Activated CD4-positive, alpha-beta T cell treated with anti-CD3 and anti-CD28 coated beads for 36 hours (primary cell): ENCODE measurements at regions of chr3 and their contacts with region 1.

Region 1: DNA sequence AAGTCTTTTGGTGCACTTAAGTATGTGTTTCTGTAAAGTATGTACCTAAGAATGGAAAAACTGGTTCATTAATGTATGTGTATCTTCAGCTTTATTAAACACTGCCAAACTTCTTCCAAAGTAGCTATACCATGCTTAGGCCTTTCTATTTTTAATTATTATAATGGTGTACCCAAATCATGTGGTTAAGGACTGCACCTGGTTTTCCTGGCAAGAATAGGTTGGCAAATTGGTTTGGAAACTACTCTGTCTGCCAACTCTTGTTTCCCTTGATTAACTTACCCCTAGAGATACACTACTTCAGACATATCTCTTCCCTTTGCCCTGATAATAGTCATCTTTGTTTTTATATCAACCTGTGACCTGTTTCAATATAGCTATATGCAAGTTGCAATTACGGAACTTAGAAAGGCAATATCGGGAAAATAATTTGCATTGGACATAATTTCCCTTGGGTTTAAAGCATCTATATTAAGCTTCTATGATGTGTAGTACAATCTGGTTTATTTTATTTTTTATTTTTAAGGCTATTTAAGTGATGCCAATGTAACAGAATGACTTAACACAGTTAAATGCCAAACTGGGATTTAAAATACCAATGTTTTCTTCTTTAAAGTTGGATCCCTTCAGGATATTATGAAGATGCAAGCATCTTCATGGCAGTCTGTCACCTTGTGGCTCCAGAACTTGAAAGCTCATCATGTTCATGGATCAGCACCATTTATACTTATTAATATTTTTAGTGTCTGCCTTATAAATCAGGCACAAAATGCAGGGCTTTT is 40.6 kb upstream of the TMEM108 start:
- DNase-seq: no peak
- ATAC-seq: no peak
- H3K4me3 Mint-ChIP-seq: no peak overlapping the region
- H3K27ac Mint-ChIP-seq: no peak overlapping the region
- H3K4me1 Mint-ChIP-seq: no peaks in the 10 kb centered on the region
- H3K27me3 Mint-ChIP-seq: peaks cover 5% of the 10 kb centered on the region

Region 2: GRCh38 chr3:133007601-133008000 is 10.0 kb after region 1 on chr3:
- CTCF ChIA-PET with region 1: no interaction called
- POLR2A ChIA-PET with region 1: no interaction called
- intact Hi-C with region 1: loop called (anchors 1 kb)
- DNase-seq: no peak
- ATAC-seq: no peak
- H3K4me3 Mint-ChIP-seq: no peak overlapping the region
- H3K27ac Mint-ChIP-seq: no peak overlapping the region
- H3K4me1 Mint-ChIP-seq: no peaks in the 10 kb centered on the region
- H3K27me3 Mint-ChIP-seq: peaks cover 6% of the 10 kb centered on the region